ENCODE measurements at regions of chr1 and their contacts with region 1.

Region 1: GRCh38 chr1:62508187-62508758 is 71.4 kb downstream of the USP1 start:
- DNase-seq: peak; percentile 9
- ATAC-seq: peak; percentile 68
- H3K4me3 ChIP-seq: no peak overlapping the region
- H3K27ac ChIP-seq: no peak overlapping the region
- H3K4me1 ChIP-seq: no peaks in the 10 kb centered on the region
- H3K27me3 ChIP-seq: no peaks in the 10 kb centered on the region
- CTCF ChIP-seq: peak; percentile 58 to 68 (median 60)
- EP300 ChIP-seq: no peak
- POLR2A ChIP-seq: no peak
- RAD21 ChIP-seq: peak; percentile 88

Region 2: GRCh38 chr1:62530516-62531154 is 22.4 kb after region 1 on chr1:
- CTCF ChIA-PET with region 1: interaction called, 18 read pairs
- POLR2A ChIA-PET with region 1: no interaction called
- RAD21 ChIA-PET with region 1: interaction called, 3 read pairs
- SMC1A ChIA-PET with region 1: interaction called, 3 read pairs
- in situ Hi-C with region 1: no loop called
- intact Hi-C with region 1: no loop called
- DNase-seq: no peak
- ATAC-seq: no peak
- H3K4me3 ChIP-seq: no peak overlapping the region
- H3K27ac ChIP-seq: no peak overlapping the region
- H3K4me1 ChIP-seq: no peaks in the 10 kb centered on the region
- H3K27me3 ChIP-seq: no peaks in the 10 kb centered on the region
- CTCF ChIP-seq: no peak
- EP300 ChIP-seq: no peak
- POLR2A ChIP-seq: no peak
- RAD21 ChIP-seq: no peak

Region 3: GRCh38 chr1:62539028-62539447 is 30.8 kb after region 1 on chr1:
- CTCF ChIA-PET with region 1: interaction called, 13 read pairs
- POLR2A ChIA-PET with region 1: interaction called, 3 read pairs
- RAD21 ChIA-PET with region 1: interaction called, 3 read pairs
- SMC1A ChIA-PET with region 1: interaction called, 6 read pairs
- in situ Hi-C with region 1: no loop called
- intact Hi-C with region 1: no loop called
- DNase-seq: no peak
- ATAC-seq: no peak
- H3K4me3 ChIP-seq: no peak overlapping the region
- H3K27ac ChIP-seq: no peak overlapping the region
- H3K4me1 ChIP-seq: no peaks in the 10 kb centered on the region
- H3K27me3 ChIP-seq: no peaks in the 10 kb centered on the region
- CTCF ChIP-seq: no peak
- EP300 ChIP-seq: no peak
- POLR2A ChIP-seq: no peak
- RAD21 ChIP-seq: no peak

Region 4: GRCh38 chr1:62735491-62736171 is 227.4 kb after region 1 on chr1:
- CTCF ChIA-PET with region 1: interaction called, 12 read pairs
- POLR2A ChIA-PET with region 1: no interaction called
- RAD21 ChIA-PET with region 1: interaction called, 8 read pairs
- SMC1A ChIA-PET with region 1: interaction called, 12 read pairs
- in situ Hi-C with region 1: no loop called
- intact Hi-C with region 1: no loop called
- DNase-seq: no peak
- ATAC-seq: no peak
- H3K4me3 ChIP-seq: no peak overlapping the region
- H3K27ac ChIP-seq: no peak overlapping the region
- H3K4me1 ChIP-seq: no peaks in the 10 kb centered on the region
- H3K27me3 ChIP-seq: no peaks in the 10 kb centered on the region
- CTCF ChIP-seq: no peak
- EP300 ChIP-seq: no peak
- POLR2A ChIP-seq: no peak
- RAD21 ChIP-seq: no peak

Region 5: GRCh38 chr1:62823556-62823955 is 315.3 kb after region 1 on chr1:
- CTCF ChIA-PET with region 1: no interaction called
- POLR2A ChIA-PET with region 1: no interaction called
- RAD21 ChIA-PET with region 1: no interaction called
- SMC1A ChIA-PET with region 1: no interaction called
- in situ Hi-C with region 1: no loop called
- intact Hi-C with region 1: no loop called
- DNase-seq: no peak
- ATAC-seq: no peak
- H3K4me3 ChIP-seq: no peak overlapping the region
- H3K27ac ChIP-seq: no peak overlapping the region
- H3K4me1 ChIP-seq: no peaks in the 10 kb centered on the region
- H3K27me3 ChIP-seq: no peaks in the 10 kb centered on the region
- CTCF ChIP-seq: no peak
- EP300 ChIP-seq: no peak
- POLR2A ChIP-seq: no peak
- RAD21 ChIP-seq: no peak

Measured in GM12878 (cell line).